Caco-2 (cell line): ENCODE measurements at regions of chr4 and their contacts with region 1.

Region 1: DNA sequence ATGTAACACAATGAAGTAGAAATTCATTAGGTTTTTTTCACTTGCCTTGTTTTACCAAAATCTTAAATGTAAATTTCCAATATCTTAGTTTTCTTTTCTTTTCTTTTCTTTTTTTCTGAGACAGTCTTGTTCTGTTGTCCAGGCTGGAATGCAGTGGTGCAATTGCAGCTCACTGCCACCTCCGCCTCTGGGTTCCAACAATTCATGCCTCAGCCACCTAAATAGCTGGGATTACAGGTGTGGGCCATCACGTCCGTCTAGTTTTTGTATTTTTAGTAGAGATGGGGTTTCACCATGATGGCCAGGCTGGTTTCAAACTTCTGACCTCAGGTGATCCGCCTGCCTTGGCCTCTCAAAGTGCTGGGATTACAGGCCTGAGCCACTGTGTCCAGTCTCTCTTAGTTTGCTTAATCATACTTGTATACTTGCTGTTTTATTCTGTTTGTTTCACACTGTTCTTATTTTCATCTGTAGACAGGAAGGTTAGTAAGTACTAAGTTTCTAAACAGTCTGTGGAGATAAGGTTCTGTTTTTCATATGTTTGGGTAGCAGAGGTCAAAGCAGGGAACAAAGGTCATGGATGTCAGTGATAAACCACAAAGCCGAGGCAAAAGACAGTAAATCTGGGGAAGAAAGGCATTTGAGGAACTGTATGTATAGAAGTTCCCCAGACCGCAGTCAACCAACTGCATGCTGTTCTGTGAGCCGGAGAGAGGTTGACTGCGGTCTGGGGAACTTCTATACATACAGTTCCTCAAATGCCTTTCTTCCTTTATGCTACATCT is 129.1 kb downstream of the CBR4 start:
- DNase-seq: peak in 1 of 2 experiments; percentile 22
- H3K4me3 ChIP-seq: no peak overlapping the region
- H3K4me3 Mint-ChIP-seq: no peak overlapping the region
- H3K27ac Mint-ChIP-seq: peak overlapping the region; percentile 58
- H3K4me1 ChIP-seq: peaks cover 21% of the 10 kb centered on the region
- H3K4me1 Mint-ChIP-seq: peaks cover 19% of the 10 kb centered on the region
- H3K27me3 ChIP-seq: no peaks in the 10 kb centered on the region
- H3K27me3 Mint-ChIP-seq: no peaks in the 10 kb centered on the region
- CTCF ChIP-seq: no peak

Region 2: GRCh38 chr4:168847771-168848511 is 33.1 kb before region 1 on chr4:
- CTCF ChIA-PET with region 1: no interaction called
- POLR2A ChIA-PET with region 1: no interaction called
- intact Hi-C with region 1: loop called (anchors 2 kb)
- DNase-seq: no peak
- H3K4me3 ChIP-seq: no peak overlapping the region
- H3K4me3 Mint-ChIP-seq: peak overlapping the region; percentile 43
- H3K27ac Mint-ChIP-seq: no peak overlapping the region
- H3K4me1 ChIP-seq: peaks cover 22% of the 10 kb centered on the region
- H3K4me1 Mint-ChIP-seq: peaks cover 34% of the 10 kb centered on the region
- H3K27me3 ChIP-seq: no peaks in the 10 kb centered on the region
- H3K27me3 Mint-ChIP-seq: no peaks in the 10 kb centered on the region
- CTCF ChIP-seq: no peak

Region 3: GRCh38 chr4:168859888-168860694 is 20.9 kb before region 1 on chr4:
- CTCF ChIA-PET with region 1: no interaction called
- POLR2A ChIA-PET with region 1: no interaction called
- intact Hi-C with region 1: no loop called
- DNase-seq: no peak
- H3K4me3 ChIP-seq: no peak overlapping the region
- H3K4me3 Mint-ChIP-seq: no peak overlapping the region
- H3K27ac Mint-ChIP-seq: no peak overlapping the region
- H3K4me1 ChIP-seq: no peaks in the 10 kb centered on the region
- H3K4me1 Mint-ChIP-seq: no peaks in the 10 kb centered on the region
- H3K27me3 ChIP-seq: no peaks in the 10 kb centered on the region
- H3K27me3 Mint-ChIP-seq: no peaks in the 10 kb centered on the region
- CTCF ChIP-seq: no peak